AG04449 (cell line): ENCODE measurements at regions of chr12 and their contacts with region 1.

Region 1: DNA sequence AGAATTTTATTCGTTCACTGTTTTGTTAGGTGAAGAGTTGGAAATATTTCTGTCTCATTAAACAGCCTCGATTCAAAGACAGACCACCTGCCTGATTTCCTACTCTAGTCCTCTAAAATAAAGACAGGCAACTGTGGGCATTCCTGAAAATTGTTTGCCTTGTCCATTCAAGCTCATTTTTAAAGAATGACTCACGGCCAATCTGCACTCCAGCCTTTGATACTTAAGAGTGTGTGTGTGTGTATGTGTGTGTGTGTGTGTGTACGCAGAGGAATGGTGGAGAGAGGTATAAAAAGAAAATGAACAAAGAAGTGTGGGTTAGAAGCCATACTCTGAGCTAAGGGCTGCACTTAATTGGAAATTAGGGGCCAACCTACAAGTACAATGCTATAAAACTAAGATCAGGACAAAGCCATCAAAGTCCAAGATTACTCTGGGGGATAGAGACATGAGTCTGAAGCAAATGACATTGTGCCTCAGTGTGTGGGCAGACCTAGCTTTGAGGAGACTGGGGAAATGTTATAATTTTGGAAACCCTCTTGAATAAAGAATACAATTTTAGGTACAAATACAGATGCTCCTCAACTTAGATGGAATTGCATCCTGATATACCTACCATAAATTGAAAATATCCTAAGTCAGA is 45.6 kb upstream of the SOCS2 start:
- DNase-seq: peak; percentile 82
- H3K4me3 ChIP-seq: no peak overlapping the region
- CTCF ChIP-seq: no peak

Region 2: DNA sequence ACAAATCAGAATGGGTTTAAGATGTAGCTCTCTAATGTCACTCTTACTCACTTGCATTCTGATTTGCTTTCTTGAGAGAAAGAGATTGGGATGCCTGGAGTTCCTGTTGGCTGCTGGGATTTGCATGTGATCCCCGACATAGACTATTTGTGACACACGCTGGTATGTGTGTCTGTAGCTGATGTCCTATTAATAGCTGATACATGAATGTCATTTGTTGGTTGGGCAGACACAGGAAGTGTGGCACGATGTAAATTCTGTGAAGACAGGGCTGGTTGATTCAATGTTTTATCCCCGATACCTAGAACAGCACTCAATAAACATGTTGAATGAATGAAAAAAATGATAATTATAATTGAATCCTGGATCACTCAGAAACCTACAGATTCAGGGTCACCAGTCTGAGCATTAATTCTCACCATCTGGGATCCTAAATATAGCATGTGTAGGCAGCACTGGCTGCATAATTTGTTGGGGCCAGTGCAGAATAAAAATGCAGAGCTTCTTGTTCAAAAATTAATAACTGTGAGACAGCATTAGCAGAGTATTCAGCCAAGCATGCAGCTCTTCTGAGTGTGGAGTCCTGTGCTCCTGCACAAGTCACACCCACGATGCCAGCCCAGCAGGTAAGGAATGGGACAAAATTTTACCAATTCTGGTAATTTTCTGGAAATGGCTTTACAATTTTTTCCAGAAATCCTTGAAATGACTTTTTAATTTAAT is 10.0 kb after region 1 on chr12:
- CTCF ChIA-PET with region 1: interaction called, 10 read pairs
- POLR2A ChIA-PET with region 1: no interaction called
- DNase-seq: no peak
- H3K4me3 ChIP-seq: no peak overlapping the region
- CTCF ChIP-seq: no peak

Region 3: GRCh38 chr12:93550748-93551611 is 24.1 kb after region 1 on chr12:
- CTCF ChIA-PET with region 1: no interaction called
- POLR2A ChIA-PET with region 1: no interaction called
- DNase-seq: no peak
- H3K4me3 ChIP-seq: no peak overlapping the region
- CTCF ChIP-seq: no peak